Caco-2 (cell line): ENCODE measurements at regions of chr2 and their contacts with region 1.

Region 1: GRCh38 chr2:98731041-98731893 is at the start of gene MGAT4A:
- DNase-seq: peak; percentile 79 to 87
- H3K4me3 ChIP-seq: peak within 1 kb of the TSS; percentile 82
- H3K4me3 Mint-ChIP-seq: peak within 1 kb of the TSS; percentile 85
- H3K27ac Mint-ChIP-seq: peak within 1 kb of the TSS; percentile 80
- H3K4me1 ChIP-seq: peaks cover 59% of the 10 kb centered on the region
- H3K4me1 Mint-ChIP-seq: peaks cover 33% of the 10 kb centered on the region
- H3K27me3 ChIP-seq: no peaks in the 10 kb centered on the region
- H3K27me3 Mint-ChIP-seq: no peaks in the 10 kb centered on the region
- CTCF ChIP-seq: no peak
- total RNA-seq, gene MGAT4A: 63.7 and 72.3 TPM in 2 replicates

Region 2: DNA sequence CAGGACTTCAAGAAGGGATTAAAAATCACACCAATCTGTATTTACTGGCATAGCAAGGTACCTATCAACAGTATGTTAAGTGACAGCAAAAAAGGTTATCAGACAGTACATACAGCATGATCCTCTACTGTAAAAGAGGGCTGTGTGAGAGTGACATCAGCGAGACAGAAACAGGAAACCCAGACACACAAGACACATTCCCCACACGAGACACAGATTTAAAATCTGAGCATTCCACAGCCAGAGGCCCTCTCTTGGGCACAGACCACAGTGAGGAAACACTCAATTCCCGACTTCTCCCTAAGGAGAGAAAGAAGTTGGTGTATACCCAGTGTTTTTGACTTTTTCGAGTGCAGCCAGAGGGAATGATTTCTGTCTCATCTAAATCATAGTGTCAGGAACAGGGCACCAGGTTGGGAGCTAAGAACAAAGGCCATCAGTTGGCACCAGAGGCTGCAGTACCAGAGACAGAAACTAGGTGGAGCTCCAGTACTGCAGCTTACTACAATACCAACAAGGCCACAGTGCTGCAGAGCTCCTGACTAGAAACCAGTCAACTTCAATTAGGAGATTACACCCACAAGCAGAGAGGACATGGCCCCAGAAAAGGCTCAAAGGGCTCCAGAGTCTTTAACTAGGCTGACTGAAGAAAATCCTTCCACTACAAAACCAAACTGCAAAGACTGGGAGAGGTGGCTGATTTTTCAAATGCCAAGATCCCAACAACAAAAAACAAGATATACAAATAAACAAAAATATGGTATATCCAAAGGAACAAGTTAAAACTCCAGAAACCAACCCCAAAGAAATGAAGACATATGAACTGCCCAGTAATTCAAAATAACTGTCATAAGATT is 81.9 kb before region 1 on chr2:
- CTCF ChIA-PET with region 1: interaction called, 21 read pairs
- POLR2A ChIA-PET with region 1: no interaction called
- intact Hi-C with region 1: loop called (anchors 1 kb)
- DNase-seq: peak; percentile 82 to 84
- H3K4me3 ChIP-seq: no peak overlapping the region
- H3K4me3 Mint-ChIP-seq: no peak overlapping the region
- H3K27ac Mint-ChIP-seq: peak overlapping the region; percentile 4
- H3K4me1 ChIP-seq: no peaks in the 10 kb centered on the region
- H3K4me1 Mint-ChIP-seq: peaks cover 17% of the 10 kb centered on the region
- H3K27me3 ChIP-seq: no peaks in the 10 kb centered on the region
- H3K27me3 Mint-ChIP-seq: no peaks in the 10 kb centered on the region
- CTCF ChIP-seq: peak; percentile 95 to 98

Region 3: DNA sequence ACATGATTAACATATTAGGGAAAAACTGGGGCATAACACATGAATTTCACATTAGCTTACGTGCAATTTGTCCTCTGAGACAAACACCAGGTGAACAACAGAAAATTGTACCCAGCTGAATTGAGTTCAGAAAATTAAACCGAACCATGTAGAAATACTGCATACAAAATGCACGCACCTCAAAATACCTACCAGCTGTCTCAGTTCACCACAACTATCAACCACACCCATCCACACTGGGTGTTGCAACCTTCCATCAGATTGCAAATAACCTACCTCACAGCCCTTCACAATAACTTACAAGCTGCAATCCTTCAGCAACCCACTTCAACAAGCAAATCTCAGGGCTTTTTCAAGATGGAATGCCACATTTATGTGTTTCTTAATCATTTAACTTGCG is 66.9 kb before region 1 on chr2:
- CTCF ChIA-PET with region 1: no interaction called
- POLR2A ChIA-PET with region 1: no interaction called
- intact Hi-C with region 1: no loop called
- DNase-seq: peak in 1 of 2 experiments; percentile 39
- H3K4me3 ChIP-seq: no peak overlapping the region
- H3K4me3 Mint-ChIP-seq: no peak overlapping the region
- H3K27ac Mint-ChIP-seq: no peak overlapping the region
- H3K4me1 ChIP-seq: peaks cover 4% of the 10 kb centered on the region; the same call in 1 of the 2 replicates
- H3K4me1 Mint-ChIP-seq: peaks cover 5% of the 10 kb centered on the region
- H3K27me3 ChIP-seq: no peaks in the 10 kb centered on the region
- H3K27me3 Mint-ChIP-seq: no peaks in the 10 kb centered on the region
- CTCF ChIP-seq: no peak

Region 4: DNA sequence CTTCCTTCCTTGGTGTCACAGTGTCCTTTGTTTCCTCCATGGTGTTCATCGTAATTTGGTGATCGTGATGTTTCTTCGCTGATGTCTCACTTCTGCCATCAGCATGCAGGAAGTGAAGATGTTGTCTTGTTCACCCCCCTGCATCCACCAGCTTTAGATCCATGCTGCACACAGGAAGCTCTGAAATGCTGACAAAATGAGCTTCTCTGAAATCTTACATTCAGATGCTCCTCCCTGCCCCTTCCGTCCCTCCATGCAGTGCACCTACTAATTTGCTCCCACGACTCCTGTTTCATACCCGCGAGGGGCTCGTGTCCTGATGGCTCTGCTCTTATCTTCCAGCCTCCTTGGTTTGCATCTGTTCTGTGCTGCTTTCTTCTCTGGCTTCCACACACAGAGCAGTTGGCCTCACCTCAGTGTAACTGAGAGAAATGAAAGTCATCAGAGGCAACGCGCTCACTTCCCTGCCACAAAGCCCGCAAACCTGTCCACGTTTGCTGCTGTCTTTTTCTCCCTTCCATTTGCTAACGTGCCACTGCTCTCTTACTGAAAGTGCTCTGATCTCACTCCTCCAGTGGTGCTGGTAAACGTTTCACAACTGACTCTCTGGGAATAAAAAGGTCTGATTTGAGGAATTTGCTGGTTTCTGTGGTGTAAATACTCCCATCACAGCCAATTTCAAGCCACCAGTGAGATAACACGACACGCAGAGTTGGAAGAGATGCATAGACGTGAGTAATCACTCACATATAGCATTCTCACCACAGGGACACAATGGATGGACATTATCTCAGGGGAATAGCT is 40.7 kb after region 1 on chr2:
- CTCF ChIA-PET with region 1: no interaction called
- POLR2A ChIA-PET with region 1: no interaction called
- intact Hi-C with region 1: loop called (anchors 2 kb)
- DNase-seq: no peak
- H3K4me3 ChIP-seq: no peak overlapping the region
- H3K4me3 Mint-ChIP-seq: no peak overlapping the region
- H3K27ac Mint-ChIP-seq: no peak overlapping the region
- H3K4me1 ChIP-seq: peaks cover 23% of the 10 kb centered on the region
- H3K4me1 Mint-ChIP-seq: peaks cover 41% of the 10 kb centered on the region
- H3K27me3 ChIP-seq: no peaks in the 10 kb centered on the region
- H3K27me3 Mint-ChIP-seq: no peaks in the 10 kb centered on the region
- CTCF ChIP-seq: no peak

Region 5: DNA sequence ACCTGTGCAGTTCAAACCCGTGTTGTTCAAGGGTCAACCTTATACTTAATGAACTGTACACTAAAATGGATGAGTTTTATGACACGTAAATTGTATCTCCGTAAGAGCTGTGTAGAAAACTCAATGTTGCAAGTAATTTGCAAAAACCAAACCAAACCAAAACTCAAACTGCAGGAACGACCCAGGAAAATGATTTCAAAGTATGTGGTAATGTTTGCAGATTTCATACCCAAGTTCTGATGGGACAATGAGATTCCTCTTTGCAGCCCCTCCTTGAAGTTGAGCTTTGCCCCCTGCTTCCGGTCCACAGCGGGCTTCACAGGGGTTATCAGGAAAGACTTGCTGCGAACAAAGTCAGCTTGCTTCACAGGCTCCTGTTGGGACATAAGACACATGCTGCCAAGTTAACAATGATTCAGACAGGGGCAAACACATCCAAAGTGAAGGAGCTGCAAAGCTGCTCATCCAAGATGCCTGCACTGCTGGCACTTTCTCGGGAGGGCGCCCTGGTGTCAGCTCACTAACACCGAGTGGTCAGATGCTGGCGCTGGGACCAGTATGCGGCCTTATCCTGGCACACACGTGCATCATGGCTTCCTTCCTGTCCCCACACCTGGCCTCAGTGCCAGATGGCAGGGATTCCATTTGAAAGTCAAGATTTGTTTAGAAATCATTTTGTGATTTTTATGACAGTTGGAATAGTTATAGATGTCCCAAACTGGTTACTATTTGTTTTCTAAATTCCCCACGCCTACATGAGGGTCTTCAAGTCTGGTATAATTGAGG is 64.8 kb after region 1 on chr2:
- CTCF ChIA-PET with region 1: interaction called, 7 read pairs
- POLR2A ChIA-PET with region 1: interaction called, 19 read pairs
- intact Hi-C with region 1: loop called (anchors 1 kb)
- DNase-seq: peak; percentile 90 to 95
- H3K4me3 ChIP-seq: 0 out of 2 replicates have a peak overlapping the region, but pooled peaks have one; percentile 2
- H3K4me3 Mint-ChIP-seq: peak overlapping the region; percentile 56
- H3K27ac Mint-ChIP-seq: peak overlapping the region; percentile 94
- H3K4me1 ChIP-seq: peaks cover 68% of the 10 kb centered on the region
- H3K4me1 Mint-ChIP-seq: peaks cover 54% of the 10 kb centered on the region
- H3K27me3 ChIP-seq: no peaks in the 10 kb centered on the region
- H3K27me3 Mint-ChIP-seq: no peaks in the 10 kb centered on the region
- CTCF ChIP-seq: no peak